Posterior vena cava (tissue), 2 donors: ENCODE measurements at regions of chr7 and their contacts with region 1.

Region 1: GRCh38 chr7:16867328-16867727 is 14.5 kb downstream of the AGR3 start:
- DNase-seq: no peak

Region 2: DNA sequence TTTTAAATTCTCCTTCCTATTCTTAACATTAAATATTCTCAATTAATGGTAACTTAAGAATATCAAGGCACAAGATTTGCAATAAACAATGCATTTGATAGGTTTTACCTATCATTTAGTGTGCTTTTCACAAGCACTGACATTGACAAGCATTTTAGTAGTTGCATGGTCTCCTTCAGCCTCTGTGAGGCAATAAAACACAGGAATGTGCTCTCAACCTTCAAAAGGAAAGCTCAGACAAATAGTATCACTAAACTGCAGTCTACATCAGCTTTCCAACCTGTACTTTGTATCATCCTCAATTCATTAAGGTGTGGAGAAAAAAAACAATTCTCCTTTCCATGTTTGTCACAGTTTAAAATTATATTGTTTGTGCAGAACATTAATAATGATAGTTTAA is 164.9 kb before region 1 on chr7:
- intact Hi-C with region 1: no loop called
- DNase-seq: no peak

Region 3: GRCh38 chr7:18250133-18250532 is 1382.8 kb after region 1 on chr7:
- intact Hi-C with region 1: loop called in 1 of 2 experiments (anchors 5 kb)
- DNase-seq: no peak